Activated CD8-positive, alpha-beta T cell treated with anti-CD3 and anti-CD28 coated beads for 36 hours (primary cell): ENCODE measurements at regions of chr4 and their contacts with region 1.

Region 1: DNA sequence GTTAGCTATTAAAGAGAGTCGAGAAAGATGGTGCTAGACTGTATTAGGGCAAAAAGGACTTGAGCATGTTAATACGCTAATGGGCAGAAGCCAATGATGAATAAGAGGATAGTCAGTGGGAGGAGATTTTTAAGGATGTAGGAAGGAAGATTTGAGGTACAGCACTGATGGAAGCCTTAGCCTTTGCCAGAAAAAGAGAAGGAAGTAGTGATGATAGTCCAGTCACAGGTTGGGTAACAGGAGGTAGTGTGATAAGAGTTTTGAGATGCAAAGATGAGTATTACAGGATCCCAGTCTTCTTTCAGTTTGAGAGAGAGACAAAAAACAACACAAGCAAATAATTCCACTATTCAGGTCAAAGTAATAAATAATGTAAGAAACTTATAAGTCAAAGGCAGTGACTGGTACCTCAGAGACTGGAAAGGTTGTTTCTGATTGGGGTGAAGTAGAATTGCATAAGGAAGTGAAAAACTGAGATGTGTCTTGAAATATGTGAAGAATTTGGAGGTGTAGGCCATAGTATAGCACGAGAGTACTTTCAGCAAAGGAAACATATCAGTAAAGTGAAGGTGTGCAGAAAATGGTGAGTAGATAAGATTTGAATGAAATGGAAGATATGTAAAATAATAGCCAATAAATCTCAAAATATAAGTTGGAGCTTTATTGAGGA is 22.1 kb upstream of the NDNF start:
- DNase-seq: no peak
- ATAC-seq: no peak
- H3K4me3 Mint-ChIP-seq: no peak overlapping the region
- H3K27ac Mint-ChIP-seq: no peak overlapping the region
- H3K4me1 Mint-ChIP-seq: no peaks in the 10 kb centered on the region
- H3K27me3 Mint-ChIP-seq: no peaks in the 10 kb centered on the region
- CTCF ChIP-seq: no peak

Region 2: DNA sequence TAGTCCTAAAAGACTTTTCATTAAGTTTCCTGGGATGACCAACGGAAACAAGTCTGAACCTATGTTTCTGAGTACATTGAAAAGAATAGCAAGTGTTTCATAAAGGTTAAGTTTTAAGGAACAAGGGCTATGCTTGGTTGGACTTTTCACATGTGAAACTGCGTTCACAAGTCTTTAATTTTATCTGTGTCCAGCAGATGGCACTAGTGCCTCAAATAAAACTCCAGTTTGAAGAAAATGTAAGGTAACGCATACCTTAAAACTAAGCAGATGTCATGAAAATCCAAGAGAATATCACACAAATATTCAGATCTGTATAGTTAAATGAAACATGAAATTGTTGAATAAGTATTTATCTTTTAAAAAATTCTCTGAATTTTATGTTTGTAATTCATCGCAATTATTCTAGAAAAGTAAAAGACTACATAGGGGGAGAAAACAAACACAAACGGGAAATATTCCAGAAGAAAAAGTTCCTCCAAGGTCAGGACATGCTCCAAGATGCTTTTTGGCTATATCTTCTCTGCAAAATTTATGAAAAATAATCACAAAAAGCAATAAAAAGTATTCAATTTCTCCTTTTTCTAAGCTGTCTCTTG is 938.2 kb before region 1 on chr4:
- CTCF ChIA-PET with region 1: interaction called, 3 read pairs
- POLR2A ChIA-PET with region 1: no interaction called
- intact Hi-C with region 1: loop called (anchors 5 kb)
- DNase-seq: peak; percentile 20
- ATAC-seq: no peak
- H3K4me3 Mint-ChIP-seq: no peak overlapping the region
- H3K27ac Mint-ChIP-seq: no peak overlapping the region
- H3K4me1 Mint-ChIP-seq: no peaks in the 10 kb centered on the region
- H3K27me3 Mint-ChIP-seq: peaks cover 2% of the 10 kb centered on the region
- CTCF ChIP-seq: peak; percentile 64

Region 3: DNA sequence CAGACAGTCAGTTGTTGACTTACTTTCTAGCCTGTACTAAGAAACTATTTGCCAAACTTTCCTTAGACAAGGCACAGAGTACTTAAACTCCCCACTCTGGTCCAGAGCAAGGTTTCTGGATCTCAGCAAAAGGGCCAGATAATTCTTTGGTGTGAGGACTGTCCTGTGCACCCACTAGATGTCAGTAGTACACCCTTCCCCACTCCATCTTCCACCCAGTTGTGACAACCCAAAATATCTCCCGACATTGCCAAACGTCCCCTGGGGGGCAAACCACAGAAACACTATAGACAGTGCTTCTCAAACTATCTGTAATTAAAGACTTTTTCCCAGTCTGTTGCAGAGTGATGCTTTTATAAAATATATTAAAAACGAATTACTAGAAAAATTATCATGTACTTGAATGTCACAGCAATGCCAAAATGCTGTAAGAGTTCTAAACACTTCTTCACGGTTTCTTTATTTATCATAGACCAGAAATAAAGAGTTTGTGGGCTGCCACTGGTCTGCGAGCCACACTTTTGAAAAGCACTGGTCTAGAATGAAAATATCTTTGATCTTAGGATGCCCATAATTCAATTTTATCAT is 375.4 kb before region 1 on chr4:
- CTCF ChIA-PET with region 1: interaction called, 6 read pairs
- POLR2A ChIA-PET with region 1: no interaction called
- intact Hi-C with region 1: loop called (anchors 5 kb)
- DNase-seq: peak; percentile 41
- ATAC-seq: peak; percentile 42
- H3K4me3 Mint-ChIP-seq: no peak overlapping the region
- H3K27ac Mint-ChIP-seq: no peak overlapping the region
- H3K4me1 Mint-ChIP-seq: no peaks in the 10 kb centered on the region
- H3K27me3 Mint-ChIP-seq: peaks cover 1% of the 10 kb centered on the region
- CTCF ChIP-seq: peak; percentile 68

Region 4: GRCh38 chr4:121016630-121017029 is 77.8 kb before region 1 on chr4:
- CTCF ChIA-PET with region 1: no interaction called
- POLR2A ChIA-PET with region 1: no interaction called
- intact Hi-C with region 1: no loop called
- DNase-seq: no peak
- ATAC-seq: no peak
- H3K4me3 Mint-ChIP-seq: no peak overlapping the region
- H3K27ac Mint-ChIP-seq: no peak overlapping the region
- H3K4me1 Mint-ChIP-seq: peaks cover 17% of the 10 kb centered on the region
- H3K27me3 Mint-ChIP-seq: no peaks in the 10 kb centered on the region
- CTCF ChIP-seq: no peak

Region 5: DNA sequence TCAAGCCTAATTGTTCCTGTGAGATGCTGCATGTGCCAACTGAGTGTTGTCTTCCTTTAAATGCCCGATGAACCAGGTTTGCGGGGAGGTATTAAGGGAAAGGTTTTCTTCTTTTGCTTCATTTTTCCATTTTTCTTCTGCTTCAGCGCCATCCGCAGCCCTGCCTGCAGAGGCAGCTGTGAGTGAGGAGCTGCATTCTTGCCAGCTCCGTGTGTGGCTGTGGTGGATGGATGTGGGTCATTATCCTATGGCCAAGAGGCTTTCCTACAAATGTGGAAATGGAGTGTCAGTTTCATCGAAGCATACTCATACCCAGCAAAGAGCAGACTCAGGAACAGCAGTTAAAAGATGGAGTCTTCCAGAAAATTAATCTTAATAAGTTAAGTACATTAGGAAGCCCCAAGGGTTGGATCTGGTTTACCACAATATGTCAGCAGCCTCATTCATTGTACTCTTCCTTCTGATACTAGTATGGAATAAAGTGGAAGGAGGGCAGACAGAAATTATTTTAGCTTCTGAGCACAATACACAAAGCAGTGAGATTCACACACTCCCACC is 32.1 kb after region 1 on chr4:
- CTCF ChIA-PET with region 1: no interaction called
- POLR2A ChIA-PET with region 1: no interaction called
- intact Hi-C with region 1: no loop called
- DNase-seq: no peak
- ATAC-seq: no peak
- H3K4me3 Mint-ChIP-seq: no peak overlapping the region
- H3K27ac Mint-ChIP-seq: no peak overlapping the region
- H3K4me1 Mint-ChIP-seq: peaks cover 25% of the 10 kb centered on the region
- H3K27me3 Mint-ChIP-seq: no peaks in the 10 kb centered on the region
- CTCF ChIP-seq: no peak

Region 6: DNA sequence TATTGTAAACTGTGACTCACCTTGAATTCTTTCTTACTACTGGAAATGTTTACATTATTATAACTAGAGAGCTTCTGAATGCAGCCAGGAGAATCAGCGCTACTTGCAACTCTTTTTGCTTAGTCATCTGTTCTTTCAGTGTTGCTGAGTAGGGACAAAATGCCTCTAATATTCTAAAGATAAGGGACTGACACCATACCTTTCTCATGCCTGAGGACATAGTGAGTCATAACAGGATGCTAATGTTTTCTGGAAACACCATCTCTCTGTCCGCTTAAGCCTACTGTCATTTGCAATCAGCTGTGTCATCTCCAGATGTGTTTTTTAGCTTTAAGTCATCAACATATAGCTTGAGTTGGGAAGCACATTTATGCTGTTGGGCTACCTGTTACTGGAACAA is 178.1 kb after region 1 on chr4:
- CTCF ChIA-PET with region 1: no interaction called
- POLR2A ChIA-PET with region 1: no interaction called
- intact Hi-C with region 1: no loop called
- DNase-seq: no peak
- ATAC-seq: peak; percentile 79
- H3K4me3 Mint-ChIP-seq: no peak overlapping the region
- H3K27ac Mint-ChIP-seq: no peak overlapping the region
- H3K4me1 Mint-ChIP-seq: peaks cover 8% of the 10 kb centered on the region
- H3K27me3 Mint-ChIP-seq: no peaks in the 10 kb centered on the region
- CTCF ChIP-seq: no peak